ENCODE measurements at regions of chr5 and their contacts with region 1.

Region 1: DNA sequence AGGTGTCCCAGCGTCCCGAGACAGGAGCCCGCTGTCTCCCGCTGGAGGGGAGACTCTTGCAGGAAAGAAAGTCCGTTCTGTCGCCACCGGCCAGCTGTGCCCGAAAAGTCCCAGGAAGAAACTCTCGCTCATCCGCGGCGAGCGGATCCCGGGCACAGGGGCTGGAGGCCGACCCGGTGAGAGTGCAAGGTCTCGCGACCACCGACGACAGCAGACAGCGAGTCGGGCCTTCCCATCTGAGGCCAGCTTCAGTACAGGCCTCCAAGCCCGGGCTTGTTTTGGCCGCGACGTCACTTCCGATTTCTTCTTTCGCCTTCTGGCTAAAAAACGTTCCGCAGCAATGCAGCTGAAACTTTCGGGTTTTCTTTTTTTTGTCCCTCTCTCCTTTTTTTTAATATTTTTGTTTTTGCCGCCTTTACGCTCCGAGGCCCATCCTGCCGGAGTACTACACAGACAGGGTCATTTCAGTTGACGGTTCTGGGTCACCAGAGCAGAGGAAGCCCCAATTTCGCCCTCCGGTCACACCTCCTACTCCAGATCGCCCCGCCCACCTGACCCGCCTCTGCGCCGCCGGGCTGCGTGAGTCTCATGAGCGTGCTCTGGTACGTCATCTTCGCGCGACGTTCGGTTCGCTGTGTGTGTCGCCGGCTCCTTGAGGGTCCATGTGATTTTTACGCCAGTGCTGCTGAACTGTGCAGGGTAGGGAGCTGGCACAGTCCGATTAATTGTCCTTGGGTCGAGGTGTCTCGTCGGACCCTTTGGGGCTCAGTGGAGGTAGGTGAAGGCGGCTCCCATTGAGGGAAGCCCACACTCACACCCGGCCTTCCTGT is at the starts of genes ANKRA2 and UTP15:
- H3K4me3 Mint-ChIP-seq: peak within 1 kb of the TSS; percentile 95
- H3K27ac Mint-ChIP-seq: peak within 1 kb of the TSS; percentile 96
- H3K4me1 Mint-ChIP-seq: peaks cover 16% of the 10 kb centered on the region
- H3K27me3 Mint-ChIP-seq: no peaks in the 10 kb centered on the region

Region 2: GRCh38 chr5:73498057-73499008 is 67.0 kb before region 1 on chr5 and contains the start of gene BTF3:
- intact Hi-C with region 1: loop called (anchors 1 kb)
- H3K4me3 Mint-ChIP-seq: peak within 1 kb of the TSS; percentile 95
- H3K27ac Mint-ChIP-seq: peak within 1 kb of the TSS; percentile 99
- H3K4me1 Mint-ChIP-seq: peaks cover 31% of the 10 kb centered on the region
- H3K27me3 Mint-ChIP-seq: peaks cover 9% of the 10 kb centered on the region